ENCODE measurements at regions of chr3 and their contacts with region 1.

Region 1: GRCh38 chr3:167380004-167380689 is at the start of gene ZBBX:
- DNase-seq: peak; percentile 62 to 90 (median 76)
- ATAC-seq: peak; percentile 92
- H3K4me3 ChIP-seq: peak within 1 kb of the TSS; percentile 37
- H3K4me3 Mint-ChIP-seq: peak within 1 kb of the TSS; percentile 75
- H3K27ac ChIP-seq: no peak within 1 kb of the TSS
- H3K27ac Mint-ChIP-seq: peak within 1 kb of the TSS; percentile 21
- H3K4me1 ChIP-seq: peaks cover 9% of the 10 kb centered on the region
- H3K4me1 Mint-ChIP-seq: peaks cover 9% of the 10 kb centered on the region
- H3K27me3 ChIP-seq: no peaks in the 10 kb centered on the region
- H3K27me3 Mint-ChIP-seq: peaks cover 5% of the 10 kb centered on the region
- CTCF ChIP-seq: peak; percentile 82
- total RNA-seq, gene ZBBX: not detected

Region 2: DNA sequence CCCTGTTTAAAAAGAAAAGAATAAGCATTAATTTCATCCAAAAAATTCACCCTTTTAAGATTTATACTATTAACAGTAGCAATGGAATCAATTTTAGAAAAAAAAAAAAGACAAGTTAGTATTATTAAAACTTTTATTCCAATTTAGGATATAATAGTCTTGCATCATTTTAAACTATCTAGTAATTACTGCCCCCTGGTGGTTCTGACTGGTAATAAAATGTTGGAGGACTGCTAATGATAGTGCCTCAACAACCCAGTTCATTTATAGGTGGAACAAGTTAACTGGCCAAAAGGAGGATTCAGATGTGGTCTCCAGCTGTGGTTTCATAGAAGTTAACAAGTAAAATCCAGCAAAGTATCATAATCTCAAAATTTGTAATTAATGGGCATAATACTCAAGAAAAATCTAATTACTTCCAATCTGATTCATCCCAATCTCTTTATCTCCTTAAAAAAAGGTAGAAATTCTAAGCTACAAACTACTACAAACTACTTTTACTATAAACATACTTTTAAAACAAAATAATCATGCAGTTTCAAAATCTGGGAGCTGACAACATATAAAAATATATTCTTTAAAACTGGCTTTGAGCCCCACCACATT is 304.3 kb after region 1 on chr3:
- CTCF ChIA-PET with region 1: interaction called, 3 read pairs
- POLR2A ChIA-PET with region 1: no interaction called
- intact Hi-C with region 1: loop called (anchors 1 to 5 kb)
- DNase-seq: peak in 10 of 14 experiments; percentile 1 to 77 (median 34)
- ATAC-seq: peak; percentile 73
- H3K4me3 ChIP-seq: no peak overlapping the region
- H3K4me3 Mint-ChIP-seq: no peak overlapping the region
- H3K27ac ChIP-seq: no peak overlapping the region
- H3K27ac Mint-ChIP-seq: no peak overlapping the region
- H3K4me1 ChIP-seq: no peaks in the 10 kb centered on the region
- H3K4me1 Mint-ChIP-seq: no peaks in the 10 kb centered on the region
- H3K27me3 ChIP-seq: no peaks in the 10 kb centered on the region
- H3K27me3 Mint-ChIP-seq: no peaks in the 10 kb centered on the region
- CTCF ChIP-seq: peak; percentile 87

Region 3: GRCh38 chr3:167734498-167735232 is 354.5 kb after region 1 on chr3 and contains the start of gene PDCD10:
- CTCF ChIA-PET with region 1: no interaction called
- POLR2A ChIA-PET with region 1: no interaction called
- intact Hi-C with region 1: loop called (anchors 2 kb)
- DNase-seq: peak; percentile 92 to 99 (median 95)
- ATAC-seq: peak; percentile 85
- H3K4me3 ChIP-seq: peak within 1 kb of the TSS; percentile 80
- H3K4me3 Mint-ChIP-seq: no peak within 1 kb of the TSS
- H3K27ac ChIP-seq: peak within 1 kb of the TSS; percentile 77 to 80
- H3K27ac Mint-ChIP-seq: no peak within 1 kb of the TSS
- H3K4me1 ChIP-seq: peaks cover 7% of the 10 kb centered on the region
- H3K4me1 Mint-ChIP-seq: peaks cover 16% of the 10 kb centered on the region
- H3K27me3 ChIP-seq: no peaks in the 10 kb centered on the region
- H3K27me3 Mint-ChIP-seq: no peaks in the 10 kb centered on the region
- CTCF ChIP-seq: no peak
- total RNA-seq, gene PDCD10: 19.0 to 22.8 TPM

Region 4: DNA sequence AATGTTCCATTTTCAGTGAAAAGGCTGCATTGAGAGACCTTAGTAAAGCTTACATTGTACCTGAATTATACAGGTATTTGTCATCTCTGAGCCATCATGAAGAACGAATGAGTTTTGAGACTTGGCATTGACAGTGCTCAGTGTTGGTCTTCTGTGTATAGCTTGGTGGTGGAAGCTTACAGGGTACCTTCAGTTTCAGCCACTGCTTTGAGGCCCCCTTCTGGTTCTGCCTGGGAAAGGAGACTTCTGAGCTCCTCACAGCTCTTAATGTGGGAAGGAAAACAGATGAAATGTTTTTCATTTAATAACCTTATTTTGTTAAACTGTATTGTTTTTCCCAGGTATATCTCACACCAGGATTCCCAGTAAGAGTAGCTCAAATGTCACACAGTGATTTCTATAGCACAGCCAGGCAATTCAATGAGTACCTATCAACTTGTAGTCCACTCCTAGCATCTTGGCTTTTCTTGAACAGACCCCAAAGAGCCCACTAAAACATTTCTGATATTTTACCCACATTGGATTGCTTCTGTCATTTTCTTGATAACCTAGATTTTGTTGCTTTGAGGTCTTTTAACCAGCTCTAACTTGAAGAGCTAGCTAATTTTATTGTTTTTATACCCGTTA is 360.9 kb after region 1 on chr3:
- CTCF ChIA-PET with region 1: no interaction called
- POLR2A ChIA-PET with region 1: interaction called, 3 read pairs
- intact Hi-C with region 1: loop called (anchors 1 to 2 kb)
- DNase-seq: peak in 11 of 14 experiments; percentile 1 to 52 (median 9)
- ATAC-seq: peak; percentile 67
- H3K4me3 ChIP-seq: no peak overlapping the region
- H3K4me3 Mint-ChIP-seq: no peak overlapping the region
- H3K27ac ChIP-seq: no peak overlapping the region
- H3K27ac Mint-ChIP-seq: no peak overlapping the region
- H3K4me1 ChIP-seq: no peaks in the 10 kb centered on the region
- H3K4me1 Mint-ChIP-seq: peaks cover 20% of the 10 kb centered on the region
- H3K27me3 ChIP-seq: no peaks in the 10 kb centered on the region
- H3K27me3 Mint-ChIP-seq: no peaks in the 10 kb centered on the region
- CTCF ChIP-seq: peak; percentile 40

Region 5: GRCh38 chr3:167882067-167882667 is 502.0 kb after region 1 on chr3:
- CTCF ChIA-PET with region 1: interaction called, 10 read pairs
- POLR2A ChIA-PET with region 1: interaction called, 3 read pairs
- intact Hi-C with region 1: loop called (anchors 1 to 5 kb)
- DNase-seq: peak in 3 of 14 experiments; percentile 52 to 56 (median 55)
- ATAC-seq: peak; percentile 55
- H3K4me3 ChIP-seq: no peak overlapping the region
- H3K4me3 Mint-ChIP-seq: no peak overlapping the region
- H3K27ac ChIP-seq: no peak overlapping the region
- H3K27ac Mint-ChIP-seq: no peak overlapping the region
- H3K4me1 ChIP-seq: no peaks in the 10 kb centered on the region
- H3K4me1 Mint-ChIP-seq: peaks cover 10% of the 10 kb centered on the region
- H3K27me3 ChIP-seq: no peaks in the 10 kb centered on the region
- H3K27me3 Mint-ChIP-seq: peaks cover 10% of the 10 kb centered on the region
- CTCF ChIP-seq: peak; percentile 73